Activated CD4-positive, alpha-beta memory T cell treated with anti-CD3 and anti-CD28 coated beads for 36 hours (primary cell): ENCODE measurements at regions of chr6 and their contacts with region 1.

Region 1: DNA sequence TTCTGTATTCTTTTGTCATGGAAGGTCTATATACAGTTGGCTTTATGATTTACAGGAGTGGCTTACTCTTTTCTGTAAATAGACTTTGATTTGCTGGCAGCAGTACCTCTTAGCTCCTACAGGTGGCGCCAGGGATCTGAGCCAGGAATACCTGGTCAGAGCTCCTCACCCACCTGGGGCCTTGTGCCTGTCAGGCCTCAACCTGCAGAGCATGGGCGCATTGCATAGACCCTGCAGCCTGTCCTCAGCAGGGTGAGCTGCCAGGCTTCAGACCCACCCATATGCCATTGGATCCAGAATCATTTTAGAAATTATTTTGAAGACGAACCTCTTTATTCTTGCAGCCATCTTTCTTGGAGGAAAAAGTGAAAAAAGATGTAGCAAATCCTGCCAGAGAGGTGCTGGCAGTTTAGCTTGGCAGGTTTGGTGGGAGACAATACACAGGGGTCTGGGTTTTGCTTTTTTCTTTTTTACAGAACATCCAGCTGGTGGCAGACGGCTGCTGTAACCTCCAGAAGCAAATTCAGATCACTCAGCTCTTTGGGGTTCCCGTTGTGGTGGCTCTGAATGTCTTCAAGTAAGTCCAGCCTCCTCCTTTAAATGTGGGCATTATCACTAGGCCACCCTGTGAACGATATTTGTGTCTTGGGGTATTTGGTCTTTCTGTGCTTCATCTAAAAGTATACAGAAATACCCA is 149.1 kb downstream of the MTHFD1L start:
- DNase-seq: peak; percentile 69
- H3K4me3 Mint-ChIP-seq: no peak overlapping the region
- H3K27ac Mint-ChIP-seq: no peak overlapping the region
- H3K4me1 Mint-ChIP-seq: peaks cover 1% of the 10 kb centered on the region
- H3K27me3 Mint-ChIP-seq: no peaks in the 10 kb centered on the region

Region 2: DNA sequence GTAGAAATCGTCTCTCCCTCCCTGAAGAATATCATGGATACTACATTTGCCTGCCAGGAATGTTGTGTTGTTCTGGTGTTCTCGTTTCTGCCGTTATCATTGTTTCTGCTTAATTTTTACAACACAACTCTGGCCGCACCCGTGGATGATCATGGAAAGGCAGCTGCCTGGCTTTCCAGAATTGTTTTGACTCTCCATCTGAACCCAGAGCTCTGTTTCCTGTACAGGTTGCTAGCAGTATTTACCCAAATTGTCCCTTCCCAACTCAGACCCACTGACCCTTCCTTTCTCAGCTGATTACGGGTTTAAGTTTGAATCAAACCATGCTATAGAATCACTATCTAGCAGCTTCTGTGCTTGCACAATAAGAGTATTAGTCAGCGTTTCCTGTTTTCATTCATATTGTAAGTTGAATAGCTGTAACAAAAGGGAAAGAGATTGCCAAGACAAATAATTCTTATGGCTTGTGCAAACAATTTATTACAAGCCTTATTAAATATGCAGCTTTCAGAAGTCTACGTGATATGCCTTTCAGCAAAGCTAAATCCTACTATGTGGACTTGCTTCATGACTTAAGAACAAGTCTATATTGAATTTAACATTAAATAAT is 10.0 kb before region 1 on chr6:
- CTCF ChIA-PET with region 1: interaction called, 23 read pairs
- POLR2A ChIA-PET with region 1: no interaction called
- intact Hi-C with region 1: no loop called
- DNase-seq: no peak
- H3K4me3 Mint-ChIP-seq: no peak overlapping the region
- H3K27ac Mint-ChIP-seq: peak overlapping the region; percentile 7
- H3K4me1 Mint-ChIP-seq: peaks cover 12% of the 10 kb centered on the region
- H3K27me3 Mint-ChIP-seq: no peaks in the 10 kb centered on the region

Region 3: DNA sequence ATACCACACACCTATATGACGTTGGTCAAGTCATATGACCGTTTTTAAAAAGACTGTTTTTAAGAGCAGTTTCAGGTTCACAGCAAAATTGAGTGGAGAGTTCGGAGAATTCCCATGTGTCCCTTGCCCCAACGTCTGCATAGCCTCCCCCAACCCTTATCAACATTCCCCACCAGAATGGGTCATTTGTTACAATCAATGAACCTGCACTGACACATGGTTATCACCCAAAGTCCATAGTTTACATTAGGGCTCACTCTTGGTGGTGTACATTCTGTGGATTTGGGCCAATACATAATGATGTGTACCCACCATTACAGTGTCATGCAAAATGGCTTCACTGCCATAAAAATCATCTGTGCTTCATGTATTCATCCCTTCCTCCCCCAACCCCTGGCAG is 324.8 kb after region 1 on chr6:
- CTCF ChIA-PET with region 1: interaction called, 52 read pairs
- POLR2A ChIA-PET with region 1: no interaction called
- intact Hi-C with region 1: loop called (anchors 1 kb)
- DNase-seq: no peak
- H3K4me3 Mint-ChIP-seq: no peak overlapping the region
- H3K27ac Mint-ChIP-seq: no peak overlapping the region
- H3K4me1 Mint-ChIP-seq: no peaks in the 10 kb centered on the region
- H3K27me3 Mint-ChIP-seq: no peaks in the 10 kb centered on the region